GM12878 (cell line): ENCODE measurements at regions of chr7 and their contacts with region 1.

Region 1: DNA sequence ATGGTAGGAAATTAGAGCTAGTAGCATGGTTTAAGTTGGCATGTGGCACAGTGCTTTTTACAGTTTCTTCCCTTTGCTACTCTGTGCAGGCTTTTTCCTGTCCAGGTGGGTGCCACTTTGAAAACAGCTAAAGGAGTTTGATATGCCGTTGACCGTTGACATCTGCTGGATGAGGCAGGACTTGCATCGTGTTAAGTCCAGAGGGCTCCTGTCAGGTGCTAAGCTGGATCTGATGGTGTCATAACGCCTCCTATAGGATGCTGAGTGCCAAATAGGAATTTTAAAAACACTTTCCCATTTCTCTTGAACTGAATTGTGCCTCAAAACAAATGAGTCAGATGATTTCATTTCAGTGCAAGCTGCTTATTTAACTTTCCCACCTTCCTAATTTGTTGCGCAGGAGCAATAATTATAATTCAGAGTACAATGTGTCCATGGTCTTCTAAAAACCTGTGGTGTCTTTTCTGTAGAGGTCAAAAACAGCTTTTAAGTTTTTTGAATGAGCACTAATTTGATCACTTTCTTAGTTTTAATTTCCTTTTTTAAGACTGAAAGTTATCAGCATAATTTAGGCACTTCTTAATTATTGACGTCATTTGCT is 178.3 kb downstream of the CDCA7L start:
- DNase-seq: peak; percentile 26
- ATAC-seq: peak; percentile 91
- H3K4me3 ChIP-seq: no peak overlapping the region
- H3K27ac ChIP-seq: no peak overlapping the region
- H3K4me1 ChIP-seq: no peaks in the 10 kb centered on the region
- H3K27me3 ChIP-seq: 0 out of 4 replicates have a peak, but pooled peaks cover 0 to 2% of the 10 kb centered on the region in 2 experiments
- CTCF ChIP-seq: peak; percentile 59 to 81 (median 76); a peak in 5 of 6 replicates
- EP300 ChIP-seq: no peak
- POLR2A ChIP-seq: no peak
- RAD21 ChIP-seq: peak; percentile 92

Region 2: DNA sequence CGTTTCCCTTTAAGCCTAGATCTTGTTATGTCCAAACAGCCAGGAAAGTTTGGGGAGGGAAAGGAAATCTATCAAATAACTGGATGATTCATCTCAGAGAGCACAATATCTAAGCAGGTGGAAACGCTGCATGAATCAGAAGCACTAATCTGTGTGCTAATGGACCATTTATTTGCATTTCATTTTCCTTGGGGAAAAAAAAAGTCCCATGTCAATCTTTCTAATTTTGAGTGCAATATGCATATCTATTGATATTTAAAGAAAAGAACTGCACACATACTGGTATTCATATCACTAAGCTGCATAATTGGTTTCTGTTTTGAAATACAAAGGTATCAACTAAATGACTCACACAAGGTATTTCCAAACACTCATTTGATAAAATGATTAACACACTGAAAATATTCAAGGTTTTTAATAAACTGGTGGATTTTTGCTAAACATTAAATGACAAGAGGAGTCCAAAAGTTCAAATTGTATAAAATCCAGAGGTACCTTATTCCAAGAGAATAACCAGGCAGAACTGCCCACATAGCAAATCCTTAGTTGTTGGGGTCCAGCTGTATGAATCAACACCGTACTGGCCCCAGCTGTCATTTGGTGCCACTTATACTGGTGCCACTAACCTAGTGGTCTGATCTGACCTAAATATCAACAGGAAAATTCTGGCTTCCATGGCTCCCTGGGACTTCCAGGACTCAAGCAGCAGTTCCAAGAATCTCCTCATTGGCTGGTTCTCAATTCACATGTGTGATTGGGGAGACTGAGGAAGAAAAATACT is 461.8 kb before region 1 on chr7:
- CTCF ChIA-PET with region 1: no interaction called
- POLR2A ChIA-PET with region 1: no interaction called
- RAD21 ChIA-PET with region 1: no interaction called
- SMC1A ChIA-PET with region 1: no interaction called
- in situ Hi-C with region 1: no loop called
- intact Hi-C with region 1: no loop called
- DNase-seq: no peak
- ATAC-seq: peak; percentile 79
- H3K4me3 ChIP-seq: no peak overlapping the region
- H3K27ac ChIP-seq: no peak overlapping the region
- H3K4me1 ChIP-seq: no peaks in the 10 kb centered on the region
- H3K27me3 ChIP-seq: no peaks in the 10 kb centered on the region
- CTCF ChIP-seq: no peak
- EP300 ChIP-seq: no peak
- POLR2A ChIP-seq: no peak
- RAD21 ChIP-seq: no peak

Region 3: GRCh38 chr7:21580073-21580521 is 187.3 kb before region 1 on chr7:
- CTCF ChIA-PET with region 1: no interaction called
- POLR2A ChIA-PET with region 1: no interaction called
- RAD21 ChIA-PET with region 1: no interaction called
- SMC1A ChIA-PET with region 1: interaction called, 3 read pairs
- in situ Hi-C with region 1: no loop called
- intact Hi-C with region 1: loop called (anchors 10 kb)
- DNase-seq: peak; percentile 23
- ATAC-seq: peak; percentile 81
- H3K4me3 ChIP-seq: no peak overlapping the region
- H3K27ac ChIP-seq: peak overlapping the region; percentile 13; the same call in 1 of the 2 replicates
- H3K4me1 ChIP-seq: no peaks in the 10 kb centered on the region
- H3K27me3 ChIP-seq: no peaks in the 10 kb centered on the region
- CTCF ChIP-seq: no peak
- EP300 ChIP-seq: no peak; a peak in 1 of 4 replicates
- POLR2A ChIP-seq: no peak
- RAD21 ChIP-seq: no peak

Region 4: GRCh38 chr7:22082886-22083703 is 315.7 kb after region 1 on chr7:
- CTCF ChIA-PET with region 1: interaction called, 12 read pairs
- POLR2A ChIA-PET with region 1: no interaction called
- RAD21 ChIA-PET with region 1: no interaction called
- SMC1A ChIA-PET with region 1: no interaction called
- in situ Hi-C with region 1: no loop called
- intact Hi-C with region 1: loop called (anchors 5 kb)
- DNase-seq: peak; percentile 35
- ATAC-seq: peak; percentile 99
- H3K4me3 ChIP-seq: peak overlapping the region; percentile 64
- H3K27ac ChIP-seq: peak overlapping the region; percentile 42
- H3K4me1 ChIP-seq: peaks cover 6% of the 10 kb centered on the region; the same call in 1 of the 2 replicates
- H3K27me3 ChIP-seq: peaks cover 0 to 2% of the 10 kb centered on the region in 2 experiments; a peak in 2 of 4 replicates
- CTCF ChIP-seq: peak; percentile 94 to 97 (median 97)
- EP300 ChIP-seq: no peak
- POLR2A ChIP-seq: peak; percentile 58; the same call in 1 of the 2 replicates
- RAD21 ChIP-seq: peak; percentile 77